ENCODE measurements at regions of chr20 and their contacts with region 1.

Region 1: DNA sequence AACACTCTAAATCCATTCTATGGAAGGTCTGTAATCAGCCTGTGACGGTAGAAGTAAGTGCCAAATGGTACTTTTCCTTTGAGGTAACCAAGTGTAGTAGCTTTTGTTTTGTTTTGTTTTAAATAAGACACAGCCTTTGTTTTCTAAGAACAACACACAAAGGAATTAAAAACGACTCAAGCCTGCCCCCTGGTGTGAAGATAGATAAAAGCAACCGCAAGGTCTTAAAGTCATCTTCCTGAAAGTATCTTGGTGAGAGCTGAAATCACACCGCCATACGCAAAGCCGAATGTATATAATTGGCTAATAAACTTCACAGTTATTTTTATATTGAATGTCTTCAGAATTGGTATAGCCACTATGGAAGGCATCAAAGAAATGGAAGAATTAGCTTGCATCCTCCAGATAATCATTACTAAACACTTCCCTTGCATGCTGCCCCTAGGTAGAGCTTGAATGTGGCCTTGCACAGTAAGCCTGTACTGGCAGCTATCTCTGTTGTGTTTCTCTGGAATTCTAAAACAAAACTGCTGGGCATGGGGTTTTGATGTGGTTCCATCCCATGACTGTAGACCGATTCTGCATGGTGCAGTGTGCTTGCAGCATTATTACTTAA is 95.6 kb downstream of the LAMP5 start:
- DNase-seq: no peak

Region 2: DNA sequence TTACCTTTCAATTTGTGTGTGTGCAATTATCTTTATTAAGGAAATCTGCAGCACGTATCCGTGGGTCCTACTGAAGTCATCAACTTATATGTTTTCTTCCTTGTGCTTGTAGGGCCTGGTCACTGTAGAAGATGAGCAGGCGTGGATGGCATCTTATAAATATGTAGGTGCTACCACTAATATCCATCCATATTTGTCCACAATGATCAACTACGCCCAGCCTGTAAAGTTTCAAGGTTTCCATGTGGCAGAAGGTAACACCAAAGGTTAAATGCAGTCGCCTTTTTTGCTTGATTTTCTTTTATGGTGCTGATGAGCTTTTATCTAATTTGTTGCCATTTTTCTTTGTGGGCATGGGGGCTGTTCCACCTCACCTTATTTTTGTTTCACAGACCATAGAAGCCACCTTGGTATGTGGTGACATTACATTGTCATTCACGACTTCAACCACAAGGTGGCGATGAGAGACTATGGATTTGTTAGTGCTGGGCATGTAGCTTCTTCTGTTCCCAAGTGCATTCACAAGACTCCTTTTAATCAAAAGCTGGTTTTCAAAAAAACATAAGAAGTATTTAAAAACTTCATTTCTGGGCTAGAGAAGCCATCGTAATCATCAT is 202.1 kb before region 1 on chr20:
- intact Hi-C with region 1: loop called (anchors 1 to 5 kb)
- DNase-seq: no peak

Measured in posterior vena cava (tissue), 2 donors.